Cardiac septum (tissue), 1 donor: ENCODE measurements at regions of chr11 and their contacts with region 1.

Region 1: GRCh38 chr11:10307442-10308207 is 2.8 kb downstream of the ADM start:
- DNase-seq: peak; percentile 93

Region 2: DNA sequence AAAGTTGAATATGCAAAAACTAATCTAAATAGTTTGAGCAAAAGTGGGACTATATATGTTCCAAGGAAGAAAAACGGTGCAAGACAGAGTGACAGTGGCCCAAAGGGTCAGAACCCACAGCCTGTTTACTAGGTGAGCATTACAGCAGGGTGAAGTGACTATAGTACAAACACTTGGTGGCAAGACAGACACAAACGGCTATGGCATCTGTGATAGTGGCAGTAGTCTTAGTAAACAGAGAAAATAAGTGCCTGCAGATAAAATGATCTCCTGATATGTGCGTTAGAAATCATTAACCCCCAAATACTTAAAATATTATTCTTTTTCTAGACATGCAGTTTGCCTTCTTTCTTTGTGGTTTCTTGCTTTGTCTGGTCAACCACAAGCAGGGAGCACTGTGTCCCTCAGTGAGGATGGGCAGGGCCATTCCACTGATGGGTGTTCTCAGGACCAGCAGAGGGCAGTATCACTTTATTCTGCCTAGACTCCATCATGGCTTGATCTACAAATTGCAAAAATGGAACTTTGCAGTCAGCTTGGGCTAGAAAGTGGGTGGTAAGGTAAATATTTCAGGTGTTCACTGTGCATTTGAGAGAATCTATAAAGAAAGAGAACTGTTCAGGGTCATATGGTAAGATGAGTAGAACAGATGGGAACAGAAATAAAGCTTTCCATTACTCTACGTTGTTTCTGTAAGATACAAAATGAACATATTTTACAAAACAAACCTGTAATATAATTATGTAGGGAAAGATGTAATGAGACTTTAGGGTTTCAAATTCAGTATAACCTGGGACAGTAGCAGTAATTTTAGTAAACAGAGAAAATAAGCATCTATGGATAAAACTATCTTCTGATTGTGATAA is 445.5 kb before region 1 on chr11:
- intact Hi-C with region 1: loop called (anchors 5 kb)
- DNase-seq: no peak

Region 3: GRCh38 chr11:10208131-10208575 is 99.5 kb before region 1 on chr11:
- intact Hi-C with region 1: loop called (anchors 5 kb)
- DNase-seq: no peak